ENCODE measurements at regions of chr14 and their contacts with region 1.

Region 1: DNA sequence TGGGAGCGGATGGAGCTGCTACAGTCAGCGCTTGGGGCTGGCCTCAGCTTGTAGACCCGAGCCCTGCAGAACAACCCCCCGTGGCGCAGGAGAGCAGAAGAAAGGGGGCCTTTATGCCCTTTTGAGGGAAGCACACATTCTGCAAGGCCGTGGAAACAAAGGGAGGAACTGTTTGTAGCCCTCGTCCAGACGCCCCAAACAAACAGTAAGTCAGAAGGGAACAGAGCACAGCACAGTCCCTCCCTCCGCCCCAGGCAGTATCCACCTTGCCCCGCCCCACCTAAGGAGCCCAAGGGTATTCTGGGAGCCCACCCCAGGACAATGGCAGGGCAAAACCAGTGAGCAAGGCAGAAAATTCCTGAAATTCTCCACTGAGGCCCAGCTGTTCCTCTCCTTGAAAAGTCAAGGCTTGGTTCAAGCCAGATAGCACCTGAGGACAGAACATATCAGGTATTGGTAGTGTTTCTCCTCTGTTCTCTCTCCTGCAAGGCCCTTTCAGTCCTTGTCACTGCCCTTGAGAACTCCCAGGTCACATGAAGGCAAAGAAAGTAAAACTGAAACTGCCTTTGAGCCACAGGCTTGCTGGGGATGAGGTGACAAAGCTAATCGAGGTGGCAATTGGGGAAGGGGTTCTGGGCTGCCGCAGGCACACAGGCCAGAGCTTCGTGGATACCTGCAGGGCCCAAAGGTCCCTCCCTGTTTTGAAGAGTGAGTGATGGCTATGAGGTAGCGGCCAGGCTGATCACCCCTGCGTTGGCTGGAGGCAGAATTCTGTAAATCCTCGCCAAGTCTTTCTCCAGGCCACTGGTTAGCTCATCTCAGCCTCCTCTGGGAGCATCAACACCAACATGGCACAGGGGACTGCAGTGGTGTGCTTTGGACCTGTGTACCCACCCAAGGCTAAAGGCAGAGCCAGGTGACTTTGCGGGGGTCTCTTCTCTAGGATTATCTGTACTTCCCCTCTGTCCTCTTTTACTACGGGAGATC is 499 bp downstream of the DGLUCY start:
- DNase-seq: peak; percentile 77
- H3K4me3 Mint-ChIP-seq: peak overlapping the region; percentile 95
- H3K27ac Mint-ChIP-seq: peak overlapping the region; percentile 92
- H3K4me1 Mint-ChIP-seq: peaks cover 59% of the 10 kb centered on the region
- H3K27me3 Mint-ChIP-seq: no peaks in the 10 kb centered on the region

Region 2: DNA sequence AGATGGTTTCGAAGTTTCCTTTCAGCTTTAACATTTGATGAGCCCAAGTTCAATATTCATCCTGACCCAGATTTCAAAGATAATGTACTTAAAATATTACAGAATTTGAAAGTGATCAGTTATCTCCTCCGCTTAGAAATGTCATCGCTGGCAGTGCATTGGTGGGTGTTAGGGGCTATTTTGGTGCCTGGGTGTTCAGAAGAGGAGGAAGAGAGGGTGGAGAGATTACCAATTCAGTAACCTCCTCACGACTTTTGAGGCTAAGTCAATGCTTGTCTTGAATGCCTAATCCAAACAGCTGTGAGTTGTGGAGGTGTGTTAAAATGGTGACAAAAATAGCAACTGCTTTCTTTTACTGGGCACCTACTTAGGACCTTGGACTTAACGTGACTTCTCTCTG is 14.3 kb before region 1 on chr14:
- intact Hi-C with region 1: loop called (anchors 1 kb)
- DNase-seq: no peak
- H3K4me3 Mint-ChIP-seq: no peak overlapping the region
- H3K27ac Mint-ChIP-seq: peak overlapping the region; percentile 75
- H3K4me1 Mint-ChIP-seq: peaks cover 36% of the 10 kb centered on the region
- H3K27me3 Mint-ChIP-seq: no peaks in the 10 kb centered on the region

Region 3: GRCh38 chr14:91399868-91400640 is 285.7 kb after region 1 on chr14:
- intact Hi-C with region 1: no loop called
- DNase-seq: peak; percentile 37
- H3K4me3 Mint-ChIP-seq: peak overlapping the region; percentile 95
- H3K27ac Mint-ChIP-seq: peak overlapping the region; percentile 80
- H3K4me1 Mint-ChIP-seq: peaks cover 72% of the 10 kb centered on the region
- H3K27me3 Mint-ChIP-seq: no peaks in the 10 kb centered on the region

Measured in activated T-helper 2 cell treated with anti-CD3 and anti-CD28 coated beads, Interferon-gamma antibody, Interleukin-2, Interleukin-4, amounts not matched to agents 10 μg/mL and 5 μg/mL and 100 μg/mL, durations not matched to agents 14 hours and 24 hours and 36 hours (primary cell).